ENCODE measurements at regions of chr6 and their contacts with region 1.

Region 1: GRCh38 chr6:129251669-129252376 is 368.9 kb downstream of the LAMA2 start:
- DNase-seq: peak; percentile 17
- ATAC-seq: peak; percentile 84
- H3K4me3 ChIP-seq: no peak overlapping the region
- H3K27ac ChIP-seq: no peak overlapping the region
- H3K4me1 ChIP-seq: no peaks in the 10 kb centered on the region
- H3K27me3 ChIP-seq: peaks cover 0 to 3% of the 10 kb centered on the region in 2 experiments; a peak in 2 of 4 replicates
- CTCF ChIP-seq: peak; percentile 76 to 88 (median 78)
- EP300 ChIP-seq: no peak
- POLR2A ChIP-seq: no peak
- RAD21 ChIP-seq: peak; percentile 90

Region 2: DNA sequence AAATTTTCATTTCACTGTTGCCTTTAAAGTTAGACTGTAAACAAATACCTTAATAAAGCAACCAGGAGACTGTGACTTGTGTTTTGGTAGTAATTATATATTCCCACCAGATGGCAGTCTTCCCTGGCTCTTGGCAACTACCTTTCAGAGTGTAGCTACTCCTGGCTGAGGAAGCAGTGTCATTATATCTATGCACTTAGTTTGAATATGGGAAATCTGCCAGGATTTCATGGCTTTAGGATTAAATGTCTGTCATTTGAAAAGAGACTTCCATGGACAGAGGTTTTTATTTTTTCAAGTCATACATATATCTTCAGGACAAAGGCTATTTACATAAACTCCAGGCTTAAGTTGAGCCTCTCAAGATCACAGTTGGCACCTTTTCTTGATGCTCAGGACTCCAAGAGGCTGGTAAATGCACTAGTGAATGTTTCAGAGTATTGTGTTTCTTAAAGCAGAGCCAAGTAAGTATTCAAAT is 1514.8 kb before region 1 on chr6:
- CTCF ChIA-PET with region 1: interaction called, 3 read pairs
- POLR2A ChIA-PET with region 1: no interaction called
- RAD21 ChIA-PET with region 1: no interaction called
- SMC1A ChIA-PET with region 1: no interaction called
- in situ Hi-C with region 1: no loop called
- intact Hi-C with region 1: loop called (anchors 2 kb)
- DNase-seq: peak; percentile 12
- ATAC-seq: peak; percentile 93
- H3K4me3 ChIP-seq: no peak overlapping the region
- H3K27ac ChIP-seq: no peak overlapping the region
- H3K4me1 ChIP-seq: no peaks in the 10 kb centered on the region
- H3K27me3 ChIP-seq: no peaks in the 10 kb centered on the region
- CTCF ChIP-seq: peak; percentile 43 to 72 (median 49); a peak in 5 of 6 replicates
- EP300 ChIP-seq: no peak
- POLR2A ChIP-seq: no peak
- RAD21 ChIP-seq: peak; percentile 79

Region 3: GRCh38 chr6:128725271-128726233 is 526.3 kb before region 1 on chr6:
- CTCF ChIA-PET with region 1: interaction called, 28 read pairs
- POLR2A ChIA-PET with region 1: no interaction called
- RAD21 ChIA-PET with region 1: interaction called, 4 read pairs
- SMC1A ChIA-PET with region 1: interaction called, 10 read pairs
- in situ Hi-C with region 1: loop called (anchors 10 kb)
- intact Hi-C with region 1: loop called (anchors 5 kb)
- DNase-seq: no peak
- ATAC-seq: peak; percentile 56; the same call in 2 of the 3 replicates
- H3K4me3 ChIP-seq: no peak overlapping the region
- H3K27ac ChIP-seq: no peak overlapping the region
- H3K4me1 ChIP-seq: no peaks in the 10 kb centered on the region
- H3K27me3 ChIP-seq: no peaks in the 10 kb centered on the region
- CTCF ChIP-seq: peak; percentile 54 to 65 (median 56)
- EP300 ChIP-seq: no peak
- POLR2A ChIP-seq: no peak
- RAD21 ChIP-seq: peak; percentile 53

Region 4: DNA sequence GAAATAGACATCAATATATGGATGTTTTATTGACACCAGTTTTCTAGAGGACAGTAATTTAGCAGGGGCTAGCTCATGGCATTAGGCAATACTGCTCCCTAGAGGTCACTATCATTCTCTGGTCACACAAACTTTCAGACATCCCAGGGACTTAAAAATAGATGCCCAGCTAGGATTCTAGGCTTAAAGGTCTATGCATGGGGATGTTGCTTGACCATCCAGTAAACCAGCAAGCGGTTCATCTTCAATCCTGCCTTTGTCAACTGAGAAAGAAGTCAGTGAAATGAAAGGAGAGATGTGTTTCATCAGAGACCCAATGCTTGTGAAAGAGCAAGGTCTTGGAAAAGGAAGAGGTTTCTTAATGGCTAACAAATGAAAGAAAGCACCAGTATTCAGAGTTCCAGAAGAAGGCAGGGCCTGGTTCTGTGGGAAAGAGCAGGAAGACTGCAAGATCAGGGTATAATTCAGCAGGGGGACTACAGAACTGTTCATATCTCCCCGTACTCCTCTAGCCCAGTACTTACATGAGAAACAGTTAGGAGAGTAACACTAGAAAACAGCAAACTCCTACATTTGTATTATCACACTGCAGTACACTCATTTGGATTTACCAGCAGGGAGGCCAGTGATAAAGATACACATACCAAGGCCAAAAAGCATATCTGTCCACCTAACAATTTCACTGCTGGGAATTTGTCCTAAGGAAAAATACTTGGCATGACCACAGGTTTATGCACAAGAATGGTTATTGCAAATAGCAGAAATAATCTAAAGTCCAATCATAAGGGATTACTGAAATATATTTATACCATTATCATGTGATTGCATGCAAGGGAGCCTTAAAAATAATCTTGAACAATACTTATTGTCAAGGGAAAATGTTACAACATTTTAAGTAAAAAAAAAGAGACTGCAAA is 520.3 kb before region 1 on chr6:
- CTCF ChIA-PET with region 1: interaction called, 28 read pairs
- POLR2A ChIA-PET with region 1: no interaction called
- RAD21 ChIA-PET with region 1: interaction called, 4 read pairs
- SMC1A ChIA-PET with region 1: interaction called, 10 read pairs
- in situ Hi-C with region 1: loop called (anchors 10 kb)
- intact Hi-C with region 1: loop called (anchors 5 kb)
- DNase-seq: no peak
- ATAC-seq: peak; percentile 77
- H3K4me3 ChIP-seq: no peak overlapping the region
- H3K27ac ChIP-seq: no peak overlapping the region
- H3K4me1 ChIP-seq: no peaks in the 10 kb centered on the region
- H3K27me3 ChIP-seq: no peaks in the 10 kb centered on the region
- CTCF ChIP-seq: peak; percentile 37 to 63 (median 43); a peak in 4 of 6 replicates
- EP300 ChIP-seq: no peak
- POLR2A ChIP-seq: no peak
- RAD21 ChIP-seq: peak; percentile 64

Region 5: DNA sequence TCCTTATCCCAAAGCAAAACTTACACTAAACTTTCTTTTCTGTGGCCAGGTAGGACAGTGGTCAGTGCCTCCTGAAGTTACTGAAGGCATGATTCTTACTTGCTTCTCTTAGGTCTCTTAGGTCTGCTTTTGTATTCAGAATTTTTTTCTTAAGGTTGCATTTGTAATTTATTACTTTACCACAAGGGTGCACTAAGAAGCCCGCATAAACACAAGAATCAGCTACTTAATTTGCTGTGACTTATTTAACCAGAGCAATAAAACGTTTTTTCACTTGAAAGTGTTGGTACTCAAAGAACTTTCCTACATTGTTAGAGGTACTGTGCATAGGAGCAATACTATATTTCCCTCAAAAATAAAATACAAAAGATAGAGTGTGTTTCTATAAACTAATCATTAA is 444.2 kb before region 1 on chr6:
- CTCF ChIA-PET with region 1: interaction called, 19 read pairs
- POLR2A ChIA-PET with region 1: no interaction called
- RAD21 ChIA-PET with region 1: interaction called, 3 read pairs
- SMC1A ChIA-PET with region 1: no interaction called
- in situ Hi-C with region 1: no loop called
- intact Hi-C with region 1: loop called (anchors 2 kb)
- DNase-seq: no peak
- ATAC-seq: peak; percentile 38; the same call in 1 of the 3 replicates
- H3K4me3 ChIP-seq: no peak overlapping the region
- H3K27ac ChIP-seq: no peak overlapping the region
- H3K4me1 ChIP-seq: no peaks in the 10 kb centered on the region
- H3K27me3 ChIP-seq: no peaks in the 10 kb centered on the region; a peak in 1 of 4 replicates
- CTCF ChIP-seq: peak; percentile 22 to 31 (median 26); a peak in 4 of 6 replicates
- EP300 ChIP-seq: no peak
- POLR2A ChIP-seq: no peak
- RAD21 ChIP-seq: peak; percentile 43; the same call in 1 of the 2 replicates

Region 6: GRCh38 chr6:129239825-129240491 is 11.9 kb before region 1 on chr6:
- CTCF ChIA-PET with region 1: interaction called, 10 read pairs
- POLR2A ChIA-PET with region 1: no interaction called
- RAD21 ChIA-PET with region 1: interaction called, 3 read pairs
- SMC1A ChIA-PET with region 1: interaction called, 3 read pairs
- in situ Hi-C with region 1: no loop called
- intact Hi-C with region 1: no loop called
- DNase-seq: no peak
- ATAC-seq: no peak
- H3K4me3 ChIP-seq: no peak overlapping the region
- H3K27ac ChIP-seq: no peak overlapping the region
- H3K4me1 ChIP-seq: 0 out of 2 replicates have a peak, but pooled peaks cover 4% of the 10 kb centered on the region
- H3K27me3 ChIP-seq: no peaks in the 10 kb centered on the region; a peak in 1 of 4 replicates
- CTCF ChIP-seq: no peak
- EP300 ChIP-seq: no peak
- POLR2A ChIP-seq: no peak
- RAD21 ChIP-seq: no peak

Region 7: DNA sequence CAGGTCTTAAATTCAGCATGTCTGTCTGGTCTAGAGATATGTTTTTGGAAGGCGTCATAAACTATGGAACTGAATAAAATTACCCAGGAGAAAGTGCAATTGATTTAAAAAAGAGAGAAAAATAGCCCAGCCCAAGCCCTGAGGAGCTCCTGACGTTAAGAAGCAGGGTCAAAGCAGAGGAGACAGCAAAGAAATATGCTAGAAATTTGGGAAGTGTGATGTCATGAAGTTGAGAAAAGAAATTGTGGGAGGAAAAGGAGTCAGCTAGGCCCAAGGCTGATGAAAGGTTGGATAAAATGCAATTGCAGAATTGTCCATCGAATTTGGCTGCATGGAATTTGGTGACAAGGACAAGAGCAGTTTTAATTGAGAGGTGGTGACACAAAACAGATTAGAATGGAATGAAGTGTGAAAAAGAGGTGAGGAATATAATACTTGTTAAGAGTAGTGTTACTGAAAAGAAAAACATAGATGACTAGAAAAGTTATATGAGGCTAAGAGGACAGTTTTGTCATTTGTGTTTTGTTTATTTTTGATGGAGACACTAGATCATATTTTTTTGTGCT is 12.7 kb after region 1 on chr6:
- CTCF ChIA-PET with region 1: interaction called, 13 read pairs
- POLR2A ChIA-PET with region 1: no interaction called
- RAD21 ChIA-PET with region 1: interaction called, 3 read pairs
- SMC1A ChIA-PET with region 1: no interaction called
- in situ Hi-C with region 1: no loop called
- intact Hi-C with region 1: no loop called
- DNase-seq: no peak
- ATAC-seq: no peak
- H3K4me3 ChIP-seq: no peak overlapping the region
- H3K27ac ChIP-seq: no peak overlapping the region
- H3K4me1 ChIP-seq: no peaks in the 10 kb centered on the region
- H3K27me3 ChIP-seq: no peaks in the 10 kb centered on the region
- CTCF ChIP-seq: no peak
- EP300 ChIP-seq: no peak
- POLR2A ChIP-seq: no peak
- RAD21 ChIP-seq: no peak

Region 8: DNA sequence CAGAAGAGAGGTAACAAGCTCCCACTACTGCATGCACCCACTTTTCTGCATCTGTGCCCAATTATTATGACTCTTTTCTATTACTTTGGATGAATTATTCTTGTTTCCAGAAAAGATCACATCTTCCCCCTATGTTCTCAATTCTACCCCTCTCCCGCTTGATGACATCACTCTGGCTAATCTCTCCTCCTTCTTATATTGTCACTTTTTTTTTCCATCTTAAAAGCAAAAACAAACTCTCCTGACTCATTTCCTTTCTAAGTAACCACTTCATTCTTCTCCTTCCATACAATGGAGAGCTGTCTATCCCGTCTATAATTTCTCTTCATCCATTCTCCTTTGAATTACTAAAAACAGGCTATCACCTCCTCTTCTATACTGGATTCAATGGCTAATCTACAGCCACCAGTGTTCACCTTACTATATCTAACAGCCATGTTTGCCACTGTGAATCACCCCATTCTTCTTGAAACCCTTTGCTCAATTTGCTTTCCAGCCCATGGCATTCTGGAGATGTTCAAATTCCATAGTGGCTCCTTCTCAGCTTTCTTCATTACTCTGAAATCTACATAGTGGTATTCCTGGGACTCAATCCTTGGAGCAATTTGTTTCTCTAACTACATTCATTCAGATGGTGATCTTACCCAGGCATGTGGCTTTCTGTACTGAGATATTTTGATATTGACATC is 79.8 kb after region 1 on chr6:
- CTCF ChIA-PET with region 1: no interaction called
- POLR2A ChIA-PET with region 1: no interaction called
- RAD21 ChIA-PET with region 1: no interaction called
- SMC1A ChIA-PET with region 1: no interaction called
- in situ Hi-C with region 1: no loop called
- intact Hi-C with region 1: no loop called
- DNase-seq: no peak
- ATAC-seq: no peak
- H3K4me3 ChIP-seq: no peak overlapping the region
- H3K27ac ChIP-seq: no peak overlapping the region
- H3K4me1 ChIP-seq: no peaks in the 10 kb centered on the region
- H3K27me3 ChIP-seq: no peaks in the 10 kb centered on the region; a peak in 2 of 4 replicates
- CTCF ChIP-seq: no peak
- EP300 ChIP-seq: no peak
- POLR2A ChIP-seq: no peak
- RAD21 ChIP-seq: no peak

Region 9: GRCh38 chr6:129440691-129441090 is 188.9 kb after region 1 on chr6:
- CTCF ChIA-PET with region 1: no interaction called
- POLR2A ChIA-PET with region 1: no interaction called
- RAD21 ChIA-PET with region 1: no interaction called
- SMC1A ChIA-PET with region 1: no interaction called
- in situ Hi-C with region 1: no loop called
- intact Hi-C with region 1: no loop called
- DNase-seq: no peak
- ATAC-seq: no peak
- H3K4me3 ChIP-seq: no peak overlapping the region
- H3K27ac ChIP-seq: no peak overlapping the region
- H3K4me1 ChIP-seq: no peaks in the 10 kb centered on the region
- H3K27me3 ChIP-seq: no peaks in the 10 kb centered on the region; a peak in 2 of 4 replicates
- CTCF ChIP-seq: no peak
- EP300 ChIP-seq: no peak
- POLR2A ChIP-seq: no peak
- RAD21 ChIP-seq: no peak

Measured in GM12878 (cell line).